GM10248 (cell line): ENCODE measurements at regions of chr5 and their contacts with region 1.

Region 1: GRCh38 chr5:160071516-160071915 is 47.7 kb downstream of the PWWP2A start:
- DNase-seq: no peak
- CTCF ChIP-seq: no peak

Region 2: GRCh38 chr5:160508780-160509361 is 437.4 kb after region 1 on chr5:
- CTCF ChIA-PET with region 1: no interaction called
- POLR2A ChIA-PET with region 1: interaction called, 10 read pairs
- DNase-seq: peak; percentile 77
- CTCF ChIP-seq: peak; percentile 89